Activated naive CD4-positive, alpha-beta T cell treated with anti-CD3 and anti-CD28 coated beads for 36 hours (primary cell): ENCODE measurements at regions of chr15 and their contacts with region 1.

Region 1: GRCh38 chr15:95620934-95621579 is 709.4 kb upstream of the NR2F2 start:
- DNase-seq: peak; percentile 18
- H3K4me3 Mint-ChIP-seq: no peak overlapping the region
- H3K27ac Mint-ChIP-seq: peak overlapping the region; percentile 28
- H3K4me1 Mint-ChIP-seq: peaks cover 18% of the 10 kb centered on the region
- H3K27me3 Mint-ChIP-seq: no peaks in the 10 kb centered on the region

Region 2: DNA sequence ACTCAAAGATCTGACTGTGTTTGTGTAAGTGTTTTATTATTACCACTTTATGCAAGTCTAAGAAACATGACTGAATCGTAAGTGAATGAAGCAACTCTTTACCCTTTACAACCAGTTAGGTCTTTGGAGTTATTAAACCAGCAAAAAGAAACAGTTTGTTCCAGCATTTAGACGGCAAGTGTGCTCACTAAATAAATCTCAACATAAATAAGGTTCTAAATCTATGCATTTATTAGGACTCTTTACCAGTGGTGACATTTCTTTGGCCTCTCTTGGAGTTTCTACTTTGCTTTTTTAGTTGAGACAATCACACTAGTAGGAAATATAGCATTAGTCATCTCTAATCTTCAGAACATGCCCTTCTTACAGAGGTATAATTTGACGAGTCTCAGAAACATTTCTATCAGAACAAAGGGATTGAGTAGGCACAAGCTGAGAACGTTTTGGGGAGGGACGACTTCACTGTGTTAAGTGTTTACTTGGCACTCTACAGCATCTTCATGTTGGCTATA is 30.5 kb before region 1 on chr15:
- CTCF ChIA-PET with region 1: no interaction called
- intact Hi-C with region 1: loop called (anchors 1 kb)
- DNase-seq: no peak
- H3K4me3 Mint-ChIP-seq: no peak overlapping the region
- H3K27ac Mint-ChIP-seq: no peak overlapping the region
- H3K4me1 Mint-ChIP-seq: peaks cover 4% of the 10 kb centered on the region
- H3K27me3 Mint-ChIP-seq: peaks cover 13% of the 10 kb centered on the region

Region 3: DNA sequence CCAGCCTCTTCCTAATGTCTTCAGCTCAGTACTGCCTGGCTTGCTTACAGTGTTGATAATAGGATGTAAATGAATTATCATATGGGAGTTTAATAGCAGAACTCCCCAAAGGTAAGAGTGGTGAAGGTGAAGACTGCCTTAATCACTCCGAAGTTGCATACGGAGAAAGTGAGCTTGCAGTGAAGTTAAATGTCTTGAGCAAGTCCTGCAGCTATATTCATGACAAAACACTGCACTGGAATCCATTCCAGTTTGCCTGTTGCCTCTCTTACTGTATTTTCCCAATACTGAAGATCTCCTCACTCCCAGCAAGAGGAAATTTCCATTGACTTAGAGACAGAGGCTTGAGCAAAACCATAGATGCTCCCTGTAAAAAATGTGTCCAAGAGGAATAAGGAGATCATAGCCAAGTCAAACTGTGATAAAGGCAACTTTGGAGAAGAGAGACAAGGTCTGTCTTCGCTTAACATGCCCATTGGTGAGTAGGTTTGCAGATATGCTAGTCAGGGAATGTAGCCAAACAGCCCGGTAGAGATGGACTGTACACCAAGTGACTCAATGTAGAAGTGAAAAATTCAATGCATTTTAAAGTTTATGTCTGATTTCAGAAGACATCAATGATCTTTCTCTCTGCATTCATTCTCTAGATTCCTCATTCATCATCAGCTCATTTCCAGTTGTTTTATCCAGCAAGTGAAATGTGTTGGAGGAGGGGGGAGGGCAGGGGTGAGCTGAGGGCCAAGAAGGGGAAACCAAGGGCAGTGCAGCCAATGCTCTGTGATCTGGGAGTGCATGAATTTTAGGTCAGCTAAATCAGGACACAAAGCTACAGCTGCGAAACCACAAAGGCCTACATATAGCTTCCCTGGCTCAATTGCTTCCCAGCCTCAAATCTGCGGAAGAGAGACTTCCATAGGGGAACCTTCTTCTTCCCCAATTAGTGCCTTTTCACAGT is 42.4 kb after region 1 on chr15:
- CTCF ChIA-PET with region 1: no interaction called
- intact Hi-C with region 1: no loop called
- DNase-seq: no peak
- H3K4me3 Mint-ChIP-seq: no peak overlapping the region
- H3K27ac Mint-ChIP-seq: no peak overlapping the region
- H3K4me1 Mint-ChIP-seq: peaks cover 2% of the 10 kb centered on the region
- H3K27me3 Mint-ChIP-seq: peaks cover 17% of the 10 kb centered on the region

Region 4: GRCh38 chr15:95715906-95716656 is 95.0 kb after region 1 on chr15:
- CTCF ChIA-PET with region 1: no interaction called
- intact Hi-C with region 1: no loop called
- DNase-seq: no peak
- H3K4me3 Mint-ChIP-seq: no peak overlapping the region
- H3K27ac Mint-ChIP-seq: no peak overlapping the region
- H3K4me1 Mint-ChIP-seq: peaks cover 3% of the 10 kb centered on the region
- H3K27me3 Mint-ChIP-seq: no peaks in the 10 kb centered on the region